ENCODE measurements at regions of chr11 and their contacts with region 1.

Region 1: DNA sequence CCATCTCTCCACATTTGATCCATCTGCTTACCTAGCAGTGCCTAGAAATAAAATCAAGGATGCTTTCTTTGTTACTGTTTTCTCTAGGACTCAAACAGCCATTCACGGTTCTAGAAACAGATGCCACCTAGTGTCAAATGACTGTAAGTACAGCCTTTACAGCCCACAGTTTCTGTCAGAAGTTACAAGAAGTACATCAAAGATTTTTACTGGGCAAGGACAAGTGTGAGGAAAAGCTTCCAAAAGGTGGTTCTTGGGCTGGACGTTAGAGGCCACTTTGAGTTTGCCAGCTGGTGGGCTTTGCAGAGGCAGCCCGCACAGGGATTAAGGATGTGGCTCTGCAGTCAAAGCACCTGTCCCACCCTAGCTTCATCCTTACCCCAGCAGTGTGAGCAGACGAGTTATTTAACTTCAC is 6.9 kb downstream of the KMT5B start:
- DNase-seq: peak; percentile 91
- ATAC-seq: peak; percentile 63
- H3K4me3 ChIP-seq: no peak overlapping the region
- H3K27ac ChIP-seq: no peak overlapping the region
- H3K4me1 ChIP-seq: peaks cover 7% of the 10 kb centered on the region
- H3K27me3 ChIP-seq: no peaks in the 10 kb centered on the region
- CTCF ChIP-seq: peak; percentile 90

Region 2: GRCh38 chr11:68076371-68077042 is 129.7 kb before region 1 on chr11:
- CTCF ChIA-PET with region 1: no interaction called
- POLR2A ChIA-PET with region 1: no interaction called
- intact Hi-C with region 1: loop called (anchors 5 kb)
- DNase-seq: no peak
- ATAC-seq: peak; percentile 22; the same call in 1 of the 2 replicates
- H3K4me3 ChIP-seq: no peak overlapping the region
- H3K27ac ChIP-seq: no peak overlapping the region
- H3K4me1 ChIP-seq: no peaks in the 10 kb centered on the region
- H3K27me3 ChIP-seq: no peaks in the 10 kb centered on the region
- CTCF ChIP-seq: peak; percentile 45

Measured in PC-3 (cell line).